Gastrocnemius medialis (tissue), 4 donors: ENCODE measurements at regions of chr3 and their contacts with region 1.

Region 1: DNA sequence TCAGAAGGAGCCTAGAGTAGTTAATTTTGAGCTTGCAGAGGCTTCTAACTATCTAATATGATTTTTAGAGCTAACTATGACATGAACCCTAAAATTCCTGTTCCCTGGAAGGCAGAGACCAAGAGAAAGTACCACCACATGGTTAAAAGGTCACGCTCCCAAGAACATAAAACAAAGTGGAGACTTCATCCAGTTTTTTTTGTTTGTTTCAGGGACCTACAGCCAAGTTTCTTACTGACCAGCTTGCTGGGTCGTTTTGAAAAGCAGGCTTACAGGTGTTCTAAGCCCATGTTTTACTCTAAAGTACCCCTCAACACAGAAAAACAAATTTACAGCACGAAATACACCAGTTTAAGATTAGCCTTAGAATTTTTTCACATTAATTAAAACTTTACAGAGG is 39.6 kb upstream of the SKIL start:
- DNase-seq: no peak
- ATAC-seq: no peak
- H3K4me3 ChIP-seq: no peak overlapping the region
- H3K27ac ChIP-seq: no peak overlapping the region
- H3K4me1 ChIP-seq: no peaks in the 10 kb centered on the region
- H3K27me3 ChIP-seq: no peaks in the 10 kb centered on the region
- CTCF ChIP-seq: no peak
- POLR2A ChIP-seq: no peak

Region 2: DNA sequence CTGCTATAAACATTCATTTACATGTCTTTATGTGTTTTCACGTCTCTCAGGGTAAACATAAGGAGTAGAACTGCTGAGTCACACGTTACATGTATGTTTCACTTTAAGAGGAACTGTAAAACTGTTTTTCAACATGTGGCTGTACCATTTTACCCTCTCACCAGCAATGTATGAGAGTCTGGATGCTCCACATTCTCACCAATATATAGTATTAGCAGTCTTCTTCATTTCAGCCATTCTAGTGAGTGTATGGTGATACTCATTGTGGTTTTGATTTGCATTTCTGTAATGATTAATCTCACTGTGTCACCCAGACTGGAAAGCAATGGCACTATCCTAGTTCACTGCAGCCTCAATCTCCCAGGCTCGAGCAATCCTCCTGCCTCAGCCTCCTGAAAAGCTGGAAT is 173.5 kb before region 1 on chr3:
- in situ Hi-C with region 1: no loop called
- intact Hi-C with region 1: no loop called
- DNase-seq: no peak
- ATAC-seq: no peak
- H3K4me3 ChIP-seq: no peak overlapping the region
- H3K27ac ChIP-seq: no peak overlapping the region
- H3K4me1 ChIP-seq: peaks cover 0 to 6% of the 10 kb centered on the region in 2 donors
- H3K27me3 ChIP-seq: no peaks in the 10 kb centered on the region
- CTCF ChIP-seq: no peak
- POLR2A ChIP-seq: no peak

Region 3: GRCh38 chr3:170405101-170405500 is 87.1 kb after region 1 on chr3:
- in situ Hi-C with region 1: loop called (anchors 5 to 10 kb)
- intact Hi-C with region 1: no loop called
- DNase-seq: no peak
- ATAC-seq: no peak
- H3K4me3 ChIP-seq: no peak overlapping the region
- H3K27ac ChIP-seq: no peak overlapping the region
- H3K4me1 ChIP-seq: no peaks in the 10 kb centered on the region
- H3K27me3 ChIP-seq: no peaks in the 10 kb centered on the region
- CTCF ChIP-seq: no peak
- POLR2A ChIP-seq: no peak

Region 4: DNA sequence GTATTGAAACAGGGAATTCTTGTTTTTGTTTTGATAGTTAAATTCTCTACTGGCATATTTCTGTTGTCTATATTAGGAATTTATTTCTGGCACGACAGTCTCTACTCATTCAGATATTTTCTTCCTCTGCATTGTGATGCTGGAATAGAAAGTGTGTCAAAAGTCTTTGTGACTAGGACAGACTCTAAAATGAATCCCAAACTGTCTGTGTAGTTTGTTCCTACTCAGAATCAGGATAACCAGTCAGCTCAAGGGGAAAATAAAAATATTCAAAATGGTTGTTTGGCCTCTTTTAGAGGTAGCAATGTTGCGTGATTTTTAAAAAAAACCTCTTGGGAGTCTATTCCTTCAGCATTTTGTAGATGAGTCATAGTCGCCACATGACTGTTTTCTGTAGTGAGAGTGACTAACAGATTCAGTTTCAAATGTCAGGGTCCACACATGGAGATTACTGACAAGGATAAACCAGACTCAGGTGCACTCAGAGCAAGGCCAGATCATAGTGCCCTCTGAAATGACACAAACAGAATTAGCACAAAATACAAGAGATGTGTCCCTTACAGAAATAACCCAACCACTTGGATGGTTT is 254.8 kb after region 1 on chr3:
- in situ Hi-C with region 1: no loop called
- intact Hi-C with region 1: no loop called
- DNase-seq: no peak
- ATAC-seq: peak; percentile 44 to 80
- H3K4me3 ChIP-seq: no peak overlapping the region
- H3K27ac ChIP-seq: peak overlapping the region in 2 of 4 donors; percentile 27 to 35
- H3K4me1 ChIP-seq: peaks cover 0 to 5% of the 10 kb centered on the region in 2 donors
- H3K27me3 ChIP-seq: no peaks in the 10 kb centered on the region
- CTCF ChIP-seq: no peak
- POLR2A ChIP-seq: no peak

Region 5: DNA sequence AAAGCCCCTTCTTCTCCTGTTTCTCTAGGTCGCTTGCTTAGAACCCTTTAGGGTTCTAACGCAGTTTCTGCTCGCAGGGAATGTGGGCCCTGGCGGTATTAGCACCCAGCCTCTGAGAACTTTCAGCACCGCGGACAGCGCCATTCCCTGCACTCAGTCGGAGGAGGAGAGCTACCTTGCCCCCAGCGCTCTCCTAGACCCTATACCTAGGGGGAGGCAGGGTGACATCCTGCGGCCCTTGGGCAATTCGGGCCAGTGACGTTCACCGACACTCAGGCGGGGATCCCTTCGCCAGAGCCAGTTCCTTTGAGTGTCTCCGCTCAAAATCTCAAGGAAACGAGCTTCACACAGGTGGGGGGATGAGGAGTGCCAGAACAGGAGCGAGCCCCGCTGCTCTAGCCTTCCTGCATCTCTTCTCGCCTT is 266.6 kb after region 1 on chr3:
- in situ Hi-C with region 1: no loop called
- intact Hi-C with region 1: no loop called
- DNase-seq: no peak
- ATAC-seq: no peak
- H3K4me3 ChIP-seq: no peak overlapping the region
- H3K27ac ChIP-seq: no peak overlapping the region
- H3K4me1 ChIP-seq: no peaks in the 10 kb centered on the region
- H3K27me3 ChIP-seq: peaks cover 28 to 41% (median 37%) of the 10 kb centered on the region in 3 donors
- CTCF ChIP-seq: no peak
- POLR2A ChIP-seq: no peak

Region 6: GRCh38 chr3:170811928-170812591 is 494.1 kb after region 1 on chr3:
- in situ Hi-C with region 1: loop called (anchors 10 to 25 kb)
- intact Hi-C with region 1: loop called (anchors 5 kb)
- DNase-seq: peak; percentile 17 to 29
- ATAC-seq: peak; percentile 65 to 66
- H3K4me3 ChIP-seq: no peak overlapping the region
- H3K27ac ChIP-seq: no peak overlapping the region
- H3K4me1 ChIP-seq: no peaks in the 10 kb centered on the region
- H3K27me3 ChIP-seq: no peaks in the 10 kb centered on the region
- CTCF ChIP-seq: peak; percentile 70 to 80 (median 75)
- POLR2A ChIP-seq: no peak